ENCODE measurements at regions of chr2 and their contacts with region 1.

Region 1: GRCh38 chr2:147082850-147083522 is 761.8 kb upstream of the ACVR2A start:
- DNase-seq: peak; percentile 73
- H3K4me3 ChIP-seq: no peak overlapping the region
- H3K27ac ChIP-seq: no peak overlapping the region
- H3K4me1 ChIP-seq: no peaks in the 10 kb centered on the region
- H3K27me3 ChIP-seq: no peaks in the 10 kb centered on the region
- CTCF ChIP-seq: peak; percentile 69
- POLR2A ChIP-seq: no peak

Region 2: DNA sequence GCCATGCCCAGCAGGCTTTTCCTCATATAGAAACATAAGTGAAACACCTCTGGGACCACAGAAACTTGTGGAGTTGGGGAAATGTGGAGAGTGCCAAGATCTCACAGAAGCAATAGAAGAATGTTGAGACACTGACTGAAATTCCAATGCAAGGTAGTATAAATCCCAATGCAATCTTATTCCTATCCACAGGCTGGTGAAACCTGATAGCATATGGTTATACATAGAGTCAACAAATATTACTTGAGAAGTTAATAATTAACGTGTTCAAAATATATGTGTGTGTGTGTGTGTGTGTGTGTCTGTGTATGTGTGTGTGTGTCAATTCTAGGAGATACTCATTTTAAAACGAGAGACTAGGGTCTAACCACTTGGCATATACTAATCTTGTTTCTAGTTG is 14.9 kb before region 1 on chr2:
- CTCF ChIA-PET with region 1: interaction called, 23 read pairs
- POLR2A ChIA-PET with region 1: no interaction called
- dilution Hi-C with region 1: no loop called
- intact Hi-C with region 1: no loop called
- DNase-seq: no peak
- H3K4me3 ChIP-seq: no peak overlapping the region
- H3K27ac ChIP-seq: no peak overlapping the region
- H3K4me1 ChIP-seq: no peaks in the 10 kb centered on the region
- H3K27me3 ChIP-seq: no peaks in the 10 kb centered on the region
- CTCF ChIP-seq: no peak
- POLR2A ChIP-seq: no peak

Region 3: DNA sequence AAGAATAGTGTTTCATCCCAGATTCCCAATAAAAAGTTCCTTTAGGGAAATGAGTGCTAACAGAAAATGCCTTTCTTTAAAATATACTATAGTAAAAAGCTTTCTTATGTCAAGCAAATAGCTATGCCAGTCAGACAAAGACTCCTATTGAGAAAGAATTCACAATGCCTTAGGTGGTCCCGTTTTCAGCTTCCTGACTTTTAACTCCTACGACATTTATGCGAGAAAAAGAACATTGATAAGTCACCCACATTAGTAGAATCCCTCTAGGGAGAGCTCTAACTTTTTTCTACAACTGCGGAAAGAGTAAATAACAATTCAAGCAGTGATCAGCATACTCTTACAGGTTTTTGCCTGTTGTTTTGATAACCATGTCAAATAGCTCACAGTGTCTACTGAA is 11.1 kb after region 1 on chr2:
- CTCF ChIA-PET with region 1: interaction called, 15 read pairs
- POLR2A ChIA-PET with region 1: no interaction called
- dilution Hi-C with region 1: no loop called
- intact Hi-C with region 1: no loop called
- DNase-seq: no peak
- H3K4me3 ChIP-seq: no peak overlapping the region
- H3K27ac ChIP-seq: no peak overlapping the region
- H3K4me1 ChIP-seq: no peaks in the 10 kb centered on the region
- H3K27me3 ChIP-seq: no peaks in the 10 kb centered on the region
- CTCF ChIP-seq: no peak
- POLR2A ChIP-seq: no peak